ENCODE measurements at regions of chr1 and their contacts with region 1.

Region 1: DNA sequence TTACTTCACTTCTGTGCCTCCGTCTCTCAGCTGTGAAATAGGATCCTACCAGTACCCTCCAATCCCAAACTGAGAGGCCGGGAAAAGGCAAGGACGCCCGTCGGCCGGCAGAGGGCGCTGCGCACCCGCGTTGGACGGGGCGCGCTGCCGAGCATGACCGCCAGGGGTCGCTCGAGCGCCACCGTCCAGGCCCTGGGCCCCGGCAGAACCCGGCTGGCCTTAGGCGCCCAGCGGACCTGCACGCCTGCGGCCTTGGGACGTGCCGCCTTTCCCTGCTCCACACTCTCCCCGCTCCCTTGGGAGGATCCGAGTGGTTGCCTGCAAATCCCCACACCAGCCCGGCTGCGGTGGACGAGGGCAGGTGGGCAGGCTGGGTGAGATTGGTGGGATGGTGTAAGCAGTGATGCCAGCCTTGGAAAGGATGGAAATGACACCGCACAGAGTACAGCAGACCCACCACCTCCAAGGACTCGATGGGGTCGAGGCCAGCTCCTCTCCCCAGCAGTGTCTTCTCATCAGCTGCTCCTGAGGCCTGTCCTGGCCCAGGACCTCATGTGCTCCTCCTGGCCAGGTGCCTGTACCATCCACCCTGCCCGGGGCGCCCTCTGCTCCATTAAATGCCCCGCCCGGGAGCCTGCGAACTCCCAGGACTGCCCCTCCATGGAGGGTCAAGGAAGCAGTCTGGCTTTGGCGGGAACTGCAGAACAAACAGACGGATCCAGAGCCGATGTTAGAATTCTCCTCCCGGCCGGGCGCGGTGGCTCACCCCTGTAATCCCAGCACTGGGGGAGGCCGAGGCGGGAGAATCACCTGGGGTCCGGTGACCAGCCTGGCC is 47.4 kb upstream of the LBR start:
- DNase-seq: peak in 4 of 5 donors; percentile 66 to 80 (median 69)
- H3K4me3 ChIP-seq: no peak overlapping the region
- H3K4me3 Mint-ChIP-seq: no peak overlapping the region
- H3K27ac ChIP-seq: no peak overlapping the region
- H3K27ac Mint-ChIP-seq: peak overlapping the region in 5 of 7 donors; percentile 5 to 75 (median 23)
- H3K4me1 ChIP-seq: peaks cover 36% of the 10 kb centered on the region
- H3K4me1 Mint-ChIP-seq: peaks cover 27 to 50% (median 35%) of the 10 kb centered on the region in 4 donors
- H3K27me3 ChIP-seq: no peaks in the 10 kb centered on the region
- H3K27me3 Mint-ChIP-seq: peaks cover 0 to 3% of the 10 kb centered on the region in 2 donors

Region 2: DNA sequence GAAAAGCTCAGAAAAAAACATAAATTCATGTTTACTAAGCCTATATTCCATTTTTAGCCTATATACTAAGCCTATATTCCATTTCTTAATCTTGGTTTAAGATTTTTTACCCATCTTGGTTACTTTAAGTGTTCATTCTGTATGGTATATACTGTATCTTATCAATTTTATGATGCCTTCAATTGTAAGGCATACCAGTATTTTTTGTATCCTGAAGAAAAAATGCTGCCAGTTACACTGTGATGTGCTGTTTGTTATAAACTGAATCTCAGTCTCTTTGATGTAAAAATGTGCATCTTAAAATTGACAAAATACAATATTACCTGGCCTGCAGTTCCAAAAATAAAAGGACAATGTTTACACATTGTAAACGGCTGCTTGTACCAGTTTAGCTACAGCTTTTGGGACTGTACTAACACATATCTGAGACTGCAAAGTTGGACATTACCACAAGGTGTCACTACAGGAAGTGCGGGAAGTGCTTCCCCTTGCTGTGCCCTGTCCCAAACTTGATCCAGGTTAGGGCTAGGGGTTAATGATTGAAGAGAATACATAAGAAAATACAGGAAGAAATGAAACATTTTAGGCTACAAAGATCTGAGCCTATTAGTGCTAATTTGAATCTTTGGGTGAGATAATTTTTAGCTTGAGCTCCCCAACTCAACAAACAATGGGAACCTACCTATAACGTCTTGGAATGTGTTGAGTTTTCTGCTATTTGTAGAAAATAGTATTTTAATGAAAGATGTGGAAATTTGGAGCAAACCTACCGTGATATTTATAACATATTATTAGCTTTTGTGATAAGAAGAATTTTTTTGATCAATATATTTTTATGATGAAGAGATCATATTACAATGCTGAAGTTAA is 156.3 kb before region 1 on chr1:
- CTCF ChIA-PET with region 1: interaction called, 17 read pairs
- POLR2A ChIA-PET with region 1: no interaction called
- intact Hi-C with region 1: no loop called
- DNase-seq: peak; percentile 8 to 41 (median 16)
- H3K4me3 ChIP-seq: no peak overlapping the region
- H3K4me3 Mint-ChIP-seq: no peak overlapping the region
- H3K27ac ChIP-seq: no peak overlapping the region
- H3K27ac Mint-ChIP-seq: peak overlapping the region in 1 of 7 donors; percentile 53
- H3K4me1 ChIP-seq: no peaks in the 10 kb centered on the region
- H3K4me1 Mint-ChIP-seq: peaks cover 0 to 2% (median under 1%) of the 10 kb centered on the region in 4 donors
- H3K27me3 ChIP-seq: no peaks in the 10 kb centered on the region
- H3K27me3 Mint-ChIP-seq: peaks cover 5 to 8% of the 10 kb centered on the region in 2 donors

Region 3: GRCh38 chr1:225441314-225442122 is 33.7 kb before region 1 on chr1:
- CTCF ChIA-PET with region 1: interaction called, 43 read pairs
- POLR2A ChIA-PET with region 1: interaction called, 15 read pairs
- intact Hi-C with region 1: no loop called
- DNase-seq: no peak
- H3K4me3 ChIP-seq: no peak overlapping the region
- H3K4me3 Mint-ChIP-seq: peak overlapping the region; percentile 13 to 75 (median 41)
- H3K27ac ChIP-seq: peak overlapping the region; percentile 31
- H3K27ac Mint-ChIP-seq: peak overlapping the region; percentile 25 to 84 (median 49)
- H3K4me1 ChIP-seq: peaks cover 52% of the 10 kb centered on the region
- H3K4me1 Mint-ChIP-seq: peaks cover 40 to 60% (median 53%) of the 10 kb centered on the region in 4 donors
- H3K27me3 ChIP-seq: no peaks in the 10 kb centered on the region
- H3K27me3 Mint-ChIP-seq: no peaks in the 10 kb centered on the region

Region 4: DNA sequence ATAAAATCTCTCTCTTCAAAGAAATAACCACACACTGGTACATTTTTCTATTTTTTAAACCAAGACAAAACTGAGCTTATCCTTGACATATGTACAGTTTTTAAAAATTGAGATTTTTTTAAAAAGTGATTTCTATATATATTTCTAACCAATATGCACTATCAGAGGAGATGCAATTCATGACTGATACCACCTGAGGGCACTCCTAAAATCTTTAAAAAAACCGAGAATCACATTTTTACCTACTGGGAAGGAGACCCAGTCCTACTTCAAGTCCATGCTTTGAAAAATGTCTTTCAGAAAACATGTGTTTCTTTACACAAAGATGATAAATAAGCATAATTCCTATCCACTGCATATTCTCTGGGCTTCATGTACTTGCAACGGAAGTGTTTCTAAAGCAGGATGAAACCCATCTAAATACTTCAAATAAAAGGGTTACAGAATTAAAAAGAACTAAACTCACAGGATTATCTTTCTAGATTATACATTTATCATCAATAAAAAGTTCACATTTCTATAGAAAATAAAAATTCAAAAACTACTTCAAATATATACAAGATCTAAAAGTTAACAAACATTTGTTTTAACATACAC is 79.1 kb after region 1 on chr1:
- CTCF ChIA-PET with region 1: interaction called, 4 read pairs
- POLR2A ChIA-PET with region 1: no interaction called
- intact Hi-C with region 1: loop called (anchors 10 kb)
- DNase-seq: peak in 4 of 5 donors; percentile 15 to 28 (median 22)
- H3K4me3 ChIP-seq: no peak overlapping the region
- H3K4me3 Mint-ChIP-seq: no peak overlapping the region
- H3K27ac ChIP-seq: no peak overlapping the region
- H3K27ac Mint-ChIP-seq: no peak overlapping the region
- H3K4me1 ChIP-seq: no peaks in the 10 kb centered on the region
- H3K4me1 Mint-ChIP-seq: no peaks in the 10 kb centered on the region
- H3K27me3 ChIP-seq: no peaks in the 10 kb centered on the region
- H3K27me3 Mint-ChIP-seq: peaks cover 4 to 8% of the 10 kb centered on the region in 2 donors

Region 5: DNA sequence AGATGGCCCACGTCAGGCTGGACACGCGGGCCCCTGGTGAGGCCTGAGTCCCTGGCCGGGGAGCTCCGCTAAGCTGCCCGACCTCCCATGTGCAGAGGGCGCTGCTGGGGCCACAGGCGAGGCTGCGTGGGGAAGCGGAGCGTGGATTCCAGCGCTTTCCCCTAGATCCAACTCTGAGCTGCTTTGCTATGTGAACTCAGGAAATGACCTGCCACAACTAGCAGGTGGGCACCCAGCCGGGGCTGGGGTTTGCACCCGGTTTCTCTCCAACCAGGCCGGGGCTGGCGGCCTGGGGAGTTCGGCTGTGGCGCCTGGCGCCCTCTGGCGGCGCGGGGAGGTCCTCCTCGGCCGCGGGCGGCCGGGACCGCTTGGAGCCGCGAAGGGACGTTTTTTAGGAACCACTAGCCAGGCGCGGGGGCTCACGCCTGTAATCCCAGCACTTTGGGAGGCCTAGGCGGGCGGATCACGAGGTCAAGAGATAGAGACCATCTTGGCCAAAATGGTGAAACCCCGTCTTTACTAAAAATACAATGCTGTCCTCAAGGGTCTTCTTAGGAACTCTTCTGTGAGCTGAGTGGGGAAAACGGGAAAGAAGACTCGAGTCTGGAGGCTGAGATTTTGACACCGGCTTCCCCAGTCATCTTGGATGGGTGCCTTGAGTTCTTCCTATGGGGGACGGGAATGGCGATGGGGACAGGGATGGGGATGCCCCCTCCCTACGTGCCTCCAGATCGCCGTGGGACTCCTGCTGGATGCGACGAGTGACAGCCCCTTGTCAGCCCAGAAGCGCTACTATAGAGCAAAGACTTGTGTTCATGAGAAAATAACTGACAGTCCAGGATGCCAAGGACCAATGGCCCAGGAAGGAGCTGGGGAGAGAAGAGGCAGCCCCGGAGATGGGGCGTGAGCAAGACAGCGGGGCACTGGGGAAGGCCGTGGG is 436.3 kb after region 1 on chr1:
- CTCF ChIA-PET with region 1: interaction called, 7 read pairs
- POLR2A ChIA-PET with region 1: no interaction called
- intact Hi-C with region 1: loop called (anchors 1 kb)
- DNase-seq: peak; percentile 54 to 79 (median 70)
- H3K4me3 ChIP-seq: no peak overlapping the region
- H3K4me3 Mint-ChIP-seq: peak overlapping the region in 2 of 8 donors; percentile 14 to 21
- H3K27ac ChIP-seq: no peak overlapping the region
- H3K27ac Mint-ChIP-seq: peak overlapping the region in 2 of 7 donors; percentile 51 to 64
- H3K4me1 ChIP-seq: peaks cover 25% of the 10 kb centered on the region
- H3K4me1 Mint-ChIP-seq: peaks cover 18 to 33% (median 25%) of the 10 kb centered on the region in 4 donors
- H3K27me3 ChIP-seq: no peaks in the 10 kb centered on the region
- H3K27me3 Mint-ChIP-seq: no peaks in the 10 kb centered on the region

Region 6: GRCh38 chr1:225987491-225988316 is 512.5 kb after region 1 on chr1:
- CTCF ChIA-PET with region 1: interaction called, 19 read pairs
- POLR2A ChIA-PET with region 1: no interaction called
- intact Hi-C with region 1: no loop called
- DNase-seq: peak in 4 of 5 donors; percentile 27 to 45 (median 40)
- H3K4me3 ChIP-seq: no peak overlapping the region
- H3K4me3 Mint-ChIP-seq: no peak overlapping the region
- H3K27ac ChIP-seq: no peak overlapping the region
- H3K27ac Mint-ChIP-seq: peak overlapping the region in 5 of 7 donors; percentile 37 to 80 (median 51)
- H3K4me1 ChIP-seq: peaks cover 19% of the 10 kb centered on the region
- H3K4me1 Mint-ChIP-seq: peaks cover 17 to 37% (median 27%) of the 10 kb centered on the region in 4 donors
- H3K27me3 ChIP-seq: no peaks in the 10 kb centered on the region
- H3K27me3 Mint-ChIP-seq: no peaks in the 10 kb centered on the region

Measured in CD4-positive, alpha-beta memory T cell (primary cell).